ENCODE measurements at regions of chr15 and their contacts with region 1.

Region 1: DNA sequence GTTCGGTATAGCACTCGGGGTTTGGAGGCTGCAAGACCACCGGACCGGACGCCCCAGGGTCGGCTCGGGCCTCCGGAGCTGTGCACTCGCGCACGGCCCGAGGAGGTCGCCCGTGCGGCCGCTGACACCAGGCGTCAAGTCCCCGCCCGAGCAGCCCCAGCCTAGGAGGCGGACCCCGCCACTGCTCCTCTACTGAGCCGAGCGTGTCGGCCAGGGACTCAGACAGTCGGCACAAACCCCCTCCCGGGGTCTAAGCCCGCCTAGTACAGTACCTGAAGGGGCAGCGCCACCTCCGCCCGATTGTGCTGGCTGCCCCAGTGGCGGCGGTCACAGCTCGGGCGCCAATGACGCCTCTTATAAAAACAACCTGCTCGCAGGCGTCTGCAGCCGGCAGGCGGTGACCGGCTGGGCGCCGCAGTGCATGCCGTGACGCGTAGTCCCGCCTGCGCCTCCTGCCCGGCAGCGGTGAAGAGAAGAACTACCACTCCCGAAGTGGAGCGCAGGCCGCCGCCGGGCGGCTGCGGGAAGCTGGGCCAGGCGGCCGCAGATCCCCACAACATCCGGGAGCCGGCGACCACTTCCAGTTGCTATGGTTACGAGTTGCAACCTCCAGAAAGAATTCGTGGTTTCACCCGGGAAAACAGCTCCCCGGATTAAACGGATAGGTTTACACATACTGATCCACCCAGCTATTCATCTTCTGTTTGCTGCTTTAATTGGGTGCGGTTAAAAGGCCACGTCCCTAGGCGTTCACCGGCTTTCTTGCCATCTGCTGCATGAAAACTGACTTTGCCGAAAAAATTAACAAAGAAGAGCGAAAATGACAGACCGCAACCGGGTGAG is at the starts of genes CCPG1 and PIERCE2:
- DNase-seq: peak; percentile 91 to 96 (median 95)
- ATAC-seq: peak; percentile 98 to 99 (median 98)
- H3K4me3 ChIP-seq: peak within 1 kb of the TSS; percentile 57 to 92 (median 78)
- H3K27ac ChIP-seq: peak within 1 kb of the TSS; percentile 60 to 98 (median 92)
- H3K4me1 ChIP-seq: peaks cover 0 to 49% (median 28%) of the 10 kb centered on the region in 12 donors
- H3K27me3 ChIP-seq: no peaks in the 10 kb centered on the region
- CTCF ChIP-seq: peak; percentile 72 to 92 (median 89)
- POLR2A ChIP-seq: peak; percentile 49 to 92
- total RNA-seq, gene CCPG1: 62.2 to 105 (median 84.0) TPM
- total RNA-seq, gene PIERCE2: 3.7 to 9.4 (median 5.7) TPM

Region 2: DNA sequence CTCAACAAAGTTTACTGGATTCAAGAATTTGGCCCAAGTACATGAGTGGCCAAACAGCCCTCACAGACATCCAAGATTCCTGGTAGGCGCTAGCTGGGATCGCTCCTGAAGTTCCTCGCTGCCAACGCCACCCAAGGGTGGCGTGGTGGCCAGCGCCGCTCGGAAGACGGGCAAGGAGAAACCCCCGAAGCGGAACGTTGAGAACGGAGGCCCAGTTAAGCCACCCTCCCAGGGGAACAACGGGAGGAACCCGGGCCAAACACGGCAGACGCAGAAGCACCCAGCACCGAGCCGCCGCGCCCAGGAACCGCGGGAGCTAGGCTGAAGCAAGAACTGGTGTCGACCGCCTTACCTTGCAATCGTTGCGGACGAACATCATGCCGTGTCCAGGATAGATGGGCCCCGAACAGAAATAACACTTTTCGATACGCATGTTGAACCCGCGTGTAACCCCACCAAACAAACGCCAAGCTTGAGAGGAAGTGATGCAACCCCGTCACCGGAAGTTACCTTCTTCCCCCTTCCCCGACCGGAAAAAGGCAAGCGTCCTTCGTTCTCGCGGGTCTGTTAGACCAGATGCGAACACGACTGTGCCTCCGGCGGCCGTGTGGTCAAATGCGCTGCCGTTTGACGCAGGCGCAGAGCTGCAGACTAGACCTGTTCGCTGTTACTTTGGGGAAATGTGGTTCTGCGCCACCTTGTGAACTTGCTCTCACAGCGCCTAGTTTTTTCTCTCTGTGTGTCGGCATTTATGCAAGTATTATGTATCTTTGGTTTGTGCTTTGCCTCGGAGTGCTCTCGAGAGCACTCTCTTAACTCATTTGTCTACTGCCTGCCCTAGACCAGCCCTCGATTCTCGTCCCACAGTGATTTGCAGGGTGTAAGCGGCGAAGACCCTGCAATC is 211.5 kb before region 1 on chr15 and contains the start of gene RSL24D1:
- intact Hi-C with region 1: loop called in 2 of 10 experiments (anchors 5 to 10 kb)
- DNase-seq: peak; percentile 96 to 98 (median 96)
- ATAC-seq: peak; percentile 99 to 100 (median 100)
- H3K4me3 ChIP-seq: peak within 1 kb of the TSS; percentile 63 to 97 (median 80)
- H3K27ac ChIP-seq: peak within 1 kb of the TSS; percentile 78 to 93 (median 90)
- H3K4me1 ChIP-seq: peaks cover 0 to 43% (median 26%) of the 10 kb centered on the region in 12 donors
- H3K27me3 ChIP-seq: no peaks in the 10 kb centered on the region
- CTCF ChIP-seq: peak in 10 of 12 donors; percentile 13 to 63 (median 44)
- POLR2A ChIP-seq: peak in 1 of 2 donors; percentile 76
- total RNA-seq, gene RSL24D1: 25.5 to 51.5 (median 39.2) TPM

Region 3: GRCh38 chr15:55290528-55291057 is 117.6 kb before region 1 on chr15:
- intact Hi-C with region 1: loop called in 1 of 10 experiments (anchors 10 kb)
- DNase-seq: peak; percentile 80 to 92 (median 82)
- ATAC-seq: peak; percentile 86 to 95 (median 94)
- H3K4me3 ChIP-seq: peak overlapping the region; percentile 73 to 94 (median 84)
- H3K27ac ChIP-seq: peak overlapping the region; percentile 72 to 96 (median 87)
- H3K4me1 ChIP-seq: peaks cover 0 to 31% (median 3%) of the 10 kb centered on the region in 12 donors
- H3K27me3 ChIP-seq: no peaks in the 10 kb centered on the region
- CTCF ChIP-seq: peak; percentile 73 to 96 (median 89)
- POLR2A ChIP-seq: no peak

Region 4: GRCh38 chr15:55318588-55319494 is 89.3 kb before region 1 on chr15 and contains the starts of genes PIGB and PIGBOS1:
- intact Hi-C with region 1: loop called in 1 of 10 experiments (anchors 2 kb)
- DNase-seq: peak; percentile 86 to 91 (median 90)
- ATAC-seq: peak; percentile 93 to 99 (median 99)
- H3K4me3 ChIP-seq: peak within 1 kb of the TSS; percentile 65 to 95 (median 76)
- H3K27ac ChIP-seq: peak within 1 kb of the TSS; percentile 19 to 95 (median 85)
- H3K4me1 ChIP-seq: peaks cover 4 to 58% (median 24%) of the 10 kb centered on the region in 12 donors
- H3K27me3 ChIP-seq: no peaks in the 10 kb centered on the region
- CTCF ChIP-seq: peak in 5 of 12 donors; percentile 6 to 28 (median 11)
- POLR2A ChIP-seq: peak in 1 of 2 donors; percentile 49
- total RNA-seq, gene PIGB: 2.4 to 10.3 (median 3.0) TPM
- total RNA-seq, gene PIGBOS1: 5.8 to 12.0 (median 7.7) TPM

Region 5: DNA sequence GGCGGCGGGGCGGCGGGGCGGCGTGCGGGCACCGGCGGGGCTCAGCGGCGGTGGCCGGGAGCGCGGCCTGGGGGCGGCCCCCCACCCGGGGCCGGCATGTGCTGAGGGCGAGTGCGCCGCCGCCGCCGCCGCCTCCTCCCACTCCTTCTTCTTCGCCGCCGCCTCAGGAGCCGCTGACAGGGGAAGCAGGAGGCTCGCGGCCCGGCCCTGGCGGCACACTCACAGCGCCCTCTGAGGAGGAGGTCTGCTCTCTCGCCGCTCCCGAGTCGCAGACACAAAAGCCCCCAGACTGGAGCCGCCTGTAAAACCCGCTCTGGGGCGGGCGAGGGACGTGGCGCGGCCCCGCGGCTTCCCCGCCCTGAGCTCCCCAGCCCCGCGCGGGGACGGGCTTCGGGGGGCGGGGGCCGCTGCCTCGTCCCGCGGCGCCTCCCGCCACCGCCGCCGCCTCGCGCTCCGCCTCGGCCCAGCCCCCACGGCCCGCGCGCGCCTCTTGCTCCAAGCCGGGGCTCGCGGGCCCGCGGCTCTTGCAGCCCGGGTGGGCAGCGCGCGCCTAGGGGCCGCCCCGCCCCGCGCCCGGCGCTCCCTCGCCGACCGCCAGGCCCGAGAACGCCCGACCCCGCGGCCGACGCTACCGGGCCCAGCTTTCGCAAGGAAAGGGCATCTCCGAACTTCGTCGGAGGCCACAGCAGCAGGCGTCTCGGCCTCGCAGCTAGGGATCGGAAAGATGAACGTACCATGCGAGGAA is 180.1 kb after region 1 on chr15 and contains the start of gene PYGO1:
- intact Hi-C with region 1: loop called in 1 of 10 experiments (anchors 5 kb)
- DNase-seq: peak; percentile 43 to 80 (median 61)
- ATAC-seq: peak; percentile 39 to 87 (median 80)
- H3K4me3 ChIP-seq: peak within 1 kb of the TSS; percentile 51 to 85 (median 64)
- H3K27ac ChIP-seq: peak within 1 kb of the TSS in 9 of 12 donors; percentile 39 to 89 (median 65)
- H3K4me1 ChIP-seq: peaks cover 0 to 13% (median 0%) of the 10 kb centered on the region in 12 donors
- H3K27me3 ChIP-seq: peaks cover 0 to 54% (median 5%) of the 10 kb centered on the region in 9 donors
- CTCF ChIP-seq: no peak
- POLR2A ChIP-seq: no peak
- total RNA-seq, gene PYGO1: 3.9 to 8.2 (median 4.9) TPM